ENCODE measurements at regions of chr11 and their contacts with region 1.

Region 1: DNA sequence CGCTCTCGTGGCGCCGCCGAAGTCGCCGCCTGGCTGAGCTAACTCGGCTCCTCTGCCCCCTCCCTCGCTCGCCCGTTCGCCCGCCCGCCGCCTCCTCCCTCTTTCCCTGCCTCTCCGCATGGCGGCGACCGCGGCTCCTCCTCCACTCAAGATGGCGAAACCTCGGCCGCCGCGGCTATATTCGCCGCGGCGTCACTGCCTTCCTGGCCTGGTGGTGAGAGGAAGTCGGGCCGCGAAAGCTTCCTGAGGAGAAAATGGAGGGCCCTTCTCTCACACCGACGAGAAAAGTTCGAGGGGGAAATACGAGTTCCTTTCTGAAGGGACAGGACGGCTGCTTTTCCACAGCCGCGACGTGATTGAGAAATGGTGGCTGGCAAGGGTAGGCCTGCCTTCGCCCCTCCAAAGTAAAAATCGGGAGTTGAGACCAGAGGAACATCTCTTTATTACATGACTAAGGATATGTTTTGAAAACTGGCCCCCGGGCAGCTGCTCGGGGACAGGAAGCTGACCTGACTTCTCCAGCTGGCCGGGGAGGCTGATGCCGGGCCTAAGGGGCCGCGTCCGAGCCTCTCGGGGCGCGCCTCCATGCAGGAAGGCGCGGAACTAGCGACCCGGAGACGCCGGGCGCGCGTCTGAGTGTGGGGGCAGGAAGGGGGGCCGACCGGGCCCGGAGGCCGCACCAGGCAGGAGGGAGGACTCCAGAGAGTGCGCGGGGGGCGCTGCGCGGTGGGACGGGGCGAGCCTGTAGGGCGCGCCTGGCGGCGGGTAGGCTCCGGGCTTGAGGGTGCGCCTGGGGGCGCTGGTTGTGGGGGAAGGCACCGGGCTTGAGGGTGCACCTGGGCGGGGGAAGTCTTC is at the start of gene DDX6:
- DNase-seq: peak; percentile 89
- H3K4me3 ChIP-seq: peak within 1 kb of the TSS; percentile 99
- H3K27ac ChIP-seq: peak within 1 kb of the TSS; percentile 96
- H3K4me1 ChIP-seq: peaks cover 48% of the 10 kb centered on the region
- CTCF ChIP-seq: peak; percentile 63; the same call in 1 of the 2 replicates
- total RNA-seq, gene DDX6: 46.5 and 55.0 TPM in 2 replicates

Region 2: GRCh38 chr11:118689851-118690552 is 101.3 kb before region 1 on chr11:
- CTCF ChIA-PET with region 1: interaction called, 4 read pairs
- POLR2A ChIA-PET with region 1: interaction called, 4 read pairs
- intact Hi-C with region 1: loop called (anchors 2 kb)
- DNase-seq: peak; percentile 91
- H3K4me3 ChIP-seq: peak overlapping the region; percentile 46
- H3K27ac ChIP-seq: no peak overlapping the region
- H3K4me1 ChIP-seq: peaks cover 7% of the 10 kb centered on the region
- CTCF ChIP-seq: peak; percentile 98

Region 3: GRCh38 chr11:118813551-118813950 is 22.2 kb after region 1 on chr11:
- CTCF ChIA-PET with region 1: no interaction called
- POLR2A ChIA-PET with region 1: interaction called, 32 read pairs
- intact Hi-C with region 1: no loop called
- DNase-seq: no peak
- H3K4me3 ChIP-seq: no peak overlapping the region
- H3K27ac ChIP-seq: no peak overlapping the region
- H3K4me1 ChIP-seq: peaks cover 9% of the 10 kb centered on the region
- CTCF ChIP-seq: no peak

Region 4: GRCh38 chr11:118838905-118839553 is 47.7 kb after region 1 on chr11:
- CTCF ChIA-PET with region 1: interaction called, 3 read pairs
- POLR2A ChIA-PET with region 1: interaction called, 12 read pairs
- intact Hi-C with region 1: loop called (anchors 1 kb)
- DNase-seq: peak; percentile 72
- H3K4me3 ChIP-seq: no peak overlapping the region
- H3K27ac ChIP-seq: peak overlapping the region; percentile 57
- H3K4me1 ChIP-seq: peaks cover 53% of the 10 kb centered on the region
- CTCF ChIP-seq: no peak

Region 5: GRCh38 chr11:118870396-118871345 is 79.3 kb after region 1 on chr11:
- CTCF ChIA-PET with region 1: interaction called, 7 read pairs
- POLR2A ChIA-PET with region 1: interaction called, 94 read pairs
- intact Hi-C with region 1: loop called (anchors 1 kb)
- DNase-seq: peak; percentile 90
- H3K4me3 ChIP-seq: peak overlapping the region; percentile 68
- H3K27ac ChIP-seq: peak overlapping the region; percentile 95
- H3K4me1 ChIP-seq: peaks cover 71% of the 10 kb centered on the region
- CTCF ChIP-seq: peak; percentile 38; the same call in 1 of the 2 replicates

Region 6: DNA sequence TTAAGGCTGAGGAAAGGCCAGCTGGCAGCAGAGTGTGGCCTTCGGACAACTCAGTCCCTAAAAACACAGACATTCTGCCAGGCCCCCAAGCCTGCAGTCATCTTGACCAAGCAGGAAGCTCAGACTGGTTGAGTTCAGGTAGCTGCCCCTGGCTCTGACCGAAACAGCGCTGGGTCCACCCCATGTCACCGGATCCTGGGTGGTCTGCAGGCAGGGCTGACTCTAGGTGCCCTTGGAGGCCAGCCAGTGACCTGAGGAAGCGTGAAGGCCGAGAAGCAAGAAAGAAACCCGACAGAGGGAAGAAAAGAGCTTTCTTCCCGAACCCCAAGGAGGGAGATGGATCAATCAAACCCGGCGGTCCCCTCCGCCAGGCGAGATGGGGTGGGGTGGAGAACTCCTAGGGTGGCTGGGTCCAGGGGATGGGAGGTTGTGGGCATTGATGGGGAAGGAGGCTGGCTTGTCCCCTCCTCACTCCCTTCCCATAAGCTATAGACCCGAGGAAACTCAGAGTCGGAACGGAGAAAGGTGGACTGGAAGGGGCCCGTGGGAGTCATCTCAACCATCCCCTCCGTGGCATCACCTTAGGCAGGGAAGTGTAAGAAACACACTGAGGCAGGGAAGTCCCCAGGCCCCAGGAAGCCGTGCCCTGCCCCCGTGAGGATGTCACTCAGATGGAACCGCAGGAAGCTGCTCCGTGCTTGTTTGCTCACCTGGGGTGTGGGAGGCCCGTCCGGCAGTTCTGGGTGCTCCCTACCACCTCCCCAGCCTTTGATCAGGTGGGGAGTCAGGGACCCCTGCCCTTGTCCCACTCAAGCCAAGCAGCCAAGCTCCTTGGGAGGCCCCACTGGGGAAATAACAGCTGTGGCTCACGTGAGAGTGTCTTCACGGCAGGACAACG is 104.1 kb after region 1 on chr11:
- CTCF ChIA-PET with region 1: interaction called, 4 read pairs
- POLR2A ChIA-PET with region 1: interaction called, 81 read pairs
- intact Hi-C with region 1: loop called (anchors 1 kb)
- DNase-seq: peak; percentile 90
- H3K4me3 ChIP-seq: peak overlapping the region; percentile 57
- H3K27ac ChIP-seq: peak overlapping the region; percentile 91
- H3K4me1 ChIP-seq: peaks cover 83% of the 10 kb centered on the region
- CTCF ChIP-seq: peak; percentile 45

Region 7: DNA sequence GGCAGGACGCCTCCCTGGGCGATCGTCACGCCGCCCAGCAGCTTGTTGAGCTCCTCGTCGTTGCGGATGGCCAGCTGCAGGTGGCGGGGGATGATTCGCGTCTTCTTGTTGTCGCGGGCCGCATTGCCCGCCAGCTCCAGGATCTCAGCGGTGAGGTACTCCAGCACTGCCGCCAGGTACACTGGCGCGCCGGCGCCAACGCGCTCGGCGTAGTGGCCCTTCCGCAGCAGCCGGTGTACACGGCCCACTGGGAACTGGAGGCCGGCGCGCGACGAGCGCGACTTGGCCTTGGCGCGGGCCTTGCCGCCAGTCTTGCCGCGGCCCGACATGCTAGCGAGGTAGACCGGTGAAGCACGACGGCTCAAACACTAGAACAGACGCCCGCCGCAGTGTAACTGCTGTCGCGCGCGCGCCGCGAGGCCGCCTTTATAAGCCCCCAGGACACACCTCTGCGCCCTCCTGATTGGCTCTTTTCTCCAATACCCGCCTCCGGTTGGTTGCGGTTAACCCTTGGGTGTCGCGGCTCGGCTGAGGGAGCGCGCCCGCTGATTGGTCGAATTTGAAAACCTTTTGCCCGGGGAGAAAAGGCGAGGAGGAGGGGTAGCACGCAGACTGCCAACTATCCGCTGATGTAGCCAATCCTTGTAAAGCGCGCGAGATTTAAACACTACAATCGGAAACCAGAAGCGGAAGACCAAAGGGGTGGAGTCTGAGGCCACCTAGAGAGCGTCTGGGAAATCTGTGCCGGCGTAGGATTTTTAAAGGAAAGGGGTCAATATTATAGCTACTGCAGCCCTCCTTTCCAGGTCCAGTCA is 303.9 kb after region 1 on chr11:
- CTCF ChIA-PET with region 1: no interaction called
- POLR2A ChIA-PET with region 1: no interaction called
- intact Hi-C with region 1: loop called (anchors 5 kb)
- DNase-seq: peak; percentile 99
- H3K4me3 ChIP-seq: peak overlapping the region; percentile 81
- H3K27ac ChIP-seq: peak overlapping the region; percentile 79
- H3K4me1 ChIP-seq: peaks cover 67% of the 10 kb centered on the region
- CTCF ChIP-seq: 0 out of 2 replicates have a peak, but pooled peaks have one; percentile 22